ENCODE measurements at regions of chr2 and their contacts with region 1.

Region 1: GRCh38 chr2:182077451-182078142 is 91.9 kb downstream of the PPP1R1C start:
- DNase-seq: peak; percentile 64
- H3K4me3 ChIP-seq: no peak overlapping the region
- H3K27ac ChIP-seq: no peak overlapping the region
- H3K4me1 ChIP-seq: peaks cover 7% of the 10 kb centered on the region
- H3K27me3 ChIP-seq: no peaks in the 10 kb centered on the region
- CTCF ChIP-seq: peak; percentile 25 to 69

Region 2: DNA sequence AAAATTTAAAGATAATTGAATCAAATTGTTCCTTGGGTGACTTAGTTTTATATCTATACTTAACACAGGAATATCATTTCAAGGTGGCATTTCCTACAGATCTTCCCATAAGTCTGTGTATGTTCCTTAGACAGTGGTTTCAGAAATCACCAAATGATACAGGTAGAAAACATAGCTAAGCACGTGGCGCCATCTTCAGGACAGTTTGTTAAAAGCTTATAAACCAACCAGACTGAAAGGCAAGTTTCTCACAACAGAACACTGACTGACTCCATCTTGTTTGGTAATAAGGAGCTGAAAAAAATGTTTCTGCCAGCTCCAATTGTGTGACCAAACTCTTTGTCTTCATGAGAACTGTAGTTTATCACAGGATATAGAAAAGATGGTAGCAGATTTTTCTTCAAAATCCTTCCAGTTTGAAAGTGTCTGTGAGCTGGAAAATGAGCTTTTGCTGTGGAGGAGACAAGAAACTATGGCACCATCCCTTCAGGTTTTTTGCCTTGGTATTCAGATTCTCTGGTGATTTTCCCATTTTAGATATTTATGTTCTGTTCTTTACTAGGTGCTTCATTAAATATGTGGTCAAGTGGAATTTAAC is 362.5 kb before region 1 on chr2:
- CTCF ChIA-PET with region 1: interaction called, 12 read pairs
- dilution Hi-C with region 1: no loop called
- in situ Hi-C with region 1: no loop called
- intact Hi-C with region 1: no loop called
- DNase-seq: peak; percentile 63
- H3K4me3 ChIP-seq: no peak overlapping the region
- H3K27ac ChIP-seq: no peak overlapping the region
- H3K4me1 ChIP-seq: no peaks in the 10 kb centered on the region
- H3K27me3 ChIP-seq: peaks cover 2% of the 10 kb centered on the region
- CTCF ChIP-seq: peak; percentile 66 to 69

Region 3: DNA sequence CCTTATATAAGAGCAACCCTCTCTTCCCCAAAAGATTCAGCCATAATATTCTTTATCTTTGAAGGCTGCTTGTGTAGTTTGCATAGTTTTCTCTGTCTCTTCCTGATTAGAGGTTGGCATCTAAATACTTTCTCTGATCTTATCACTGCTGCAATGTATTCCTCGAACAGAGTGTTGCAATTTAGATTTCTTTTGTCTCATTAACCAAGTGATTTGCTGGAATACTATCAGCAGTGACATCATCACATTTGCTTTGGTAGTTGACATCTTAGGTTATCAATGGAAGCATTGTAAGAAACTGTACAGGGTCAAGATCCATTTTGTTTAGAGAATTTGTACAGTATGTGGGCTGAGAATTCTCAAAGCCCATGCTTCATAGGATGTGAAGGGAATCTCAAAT is 325.3 kb before region 1 on chr2:
- CTCF ChIA-PET with region 1: no interaction called
- dilution Hi-C with region 1: loop called (anchors 25 kb)
- in situ Hi-C with region 1: loop called (anchors 10 kb)
- intact Hi-C with region 1: no loop called
- DNase-seq: no peak
- H3K4me3 ChIP-seq: no peak overlapping the region
- H3K27ac ChIP-seq: no peak overlapping the region
- H3K4me1 ChIP-seq: peaks cover 5% of the 10 kb centered on the region
- H3K27me3 ChIP-seq: no peaks in the 10 kb centered on the region
- CTCF ChIP-seq: no peak

Region 4: DNA sequence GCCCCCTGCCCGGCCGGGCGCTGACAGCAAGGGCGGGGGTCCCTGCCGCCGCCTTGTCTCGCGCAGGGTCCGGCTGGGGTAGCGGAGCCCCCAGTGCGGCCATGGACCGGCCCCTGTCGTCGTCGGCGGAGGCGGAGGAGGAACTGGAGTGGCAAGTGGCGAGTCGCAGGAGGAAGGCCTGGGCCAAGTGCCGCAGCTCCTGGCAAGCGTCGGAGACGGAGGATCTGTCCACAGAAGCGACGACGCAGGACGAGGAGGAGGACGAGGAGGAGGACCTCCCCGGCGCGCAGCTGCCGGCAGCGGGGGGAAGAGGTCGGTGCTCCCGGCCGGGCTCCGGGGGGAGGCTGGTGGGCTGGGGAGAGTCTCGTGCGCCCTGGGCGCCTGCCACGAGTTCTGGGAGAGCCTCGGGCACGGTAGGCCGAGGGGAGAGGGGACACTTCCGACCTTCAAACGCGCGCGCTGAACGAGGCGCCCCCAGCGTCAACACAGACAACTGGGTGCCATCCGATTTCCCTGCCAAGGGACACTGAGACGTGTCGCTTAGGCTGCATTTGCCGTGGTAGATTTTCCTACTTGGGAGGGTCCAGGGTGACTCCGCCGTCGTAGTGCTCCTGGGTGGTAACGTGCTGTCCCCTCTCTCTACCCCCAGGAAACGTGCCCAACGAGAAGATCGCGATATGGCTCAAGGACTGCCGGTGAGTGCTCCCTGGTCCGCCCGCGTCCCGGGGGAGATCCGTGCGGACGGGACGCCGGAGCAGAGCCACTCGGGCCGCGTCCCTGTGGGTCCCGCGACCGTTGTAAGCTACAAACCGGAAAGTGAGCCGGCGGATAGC is 185.4 kb before region 1 on chr2:
- CTCF ChIA-PET with region 1: no interaction called
- dilution Hi-C with region 1: no loop called
- in situ Hi-C with region 1: no loop called
- intact Hi-C with region 1: loop called (anchors 5 kb)
- DNase-seq: peak; percentile 82
- H3K4me3 ChIP-seq: peak overlapping the region; percentile 83 to 95 (median 87)
- H3K27ac ChIP-seq: peak overlapping the region; percentile 85
- H3K4me1 ChIP-seq: peaks cover 16% of the 10 kb centered on the region
- H3K27me3 ChIP-seq: no peaks in the 10 kb centered on the region
- CTCF ChIP-seq: peak in 1 of 2 donors; percentile 30

Region 5: DNA sequence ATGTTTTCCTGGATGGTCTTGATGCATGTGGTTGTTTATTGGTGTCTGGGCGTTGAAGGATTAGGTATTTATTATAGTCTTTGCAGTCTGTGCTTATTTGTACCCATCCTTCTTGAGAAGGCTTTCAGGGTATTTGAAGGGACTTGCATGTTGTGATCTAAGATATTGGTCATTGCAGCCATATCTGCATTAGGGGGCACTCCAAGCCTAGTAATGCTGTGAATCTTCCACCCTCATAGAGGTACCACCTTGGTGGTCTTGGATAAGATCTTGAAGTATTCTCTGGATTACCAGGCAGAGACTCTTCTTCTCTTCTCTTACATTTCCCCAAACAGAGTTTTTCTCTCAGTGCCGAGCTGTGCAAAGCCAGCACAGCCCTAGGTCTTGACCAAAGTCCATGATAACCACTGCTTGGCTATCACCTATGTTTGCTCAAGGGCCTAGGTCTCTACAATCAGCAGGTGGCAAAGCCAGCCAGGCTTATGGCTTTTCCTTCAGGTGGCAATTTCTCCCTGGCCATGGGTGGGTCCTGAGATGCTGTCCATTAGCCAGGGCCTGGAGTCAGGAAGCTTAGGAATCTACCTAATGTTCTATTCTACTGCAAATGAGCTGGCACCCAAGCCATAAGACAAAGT is 107.3 kb before region 1 on chr2:
- CTCF ChIA-PET with region 1: interaction called, 4 read pairs
- dilution Hi-C with region 1: no loop called
- in situ Hi-C with region 1: no loop called
- intact Hi-C with region 1: loop called (anchors 1 kb)
- DNase-seq: no peak
- H3K4me3 ChIP-seq: no peak overlapping the region
- H3K27ac ChIP-seq: no peak overlapping the region
- H3K4me1 ChIP-seq: peaks cover 5% of the 10 kb centered on the region
- H3K27me3 ChIP-seq: no peaks in the 10 kb centered on the region
- CTCF ChIP-seq: no peak